Sigmoid colon (tissue), 7 donors: ENCODE measurements at regions of chr19 and their contacts with region 1.

Region 1: GRCh38 chr19:15449620-15450527 is at the start of gene WIZ:
- DNase-seq: peak; percentile 95
- H3K4me3 ChIP-seq: peak within 1 kb of the TSS; percentile 76 to 96 (median 80)
- H3K27ac ChIP-seq: peak within 1 kb of the TSS; percentile 81 to 89 (median 87)
- H3K4me1 ChIP-seq: peaks cover 0 to 37% (median 25%) of the 10 kb centered on the region in 4 donors
- H3K27me3 ChIP-seq: peaks cover 0 to 13% (median 6%) of the 10 kb centered on the region in 3 donors
- CTCF ChIP-seq: no peak
- EP300 ChIP-seq: no peak
- POLR2A ChIP-seq: no peak
- total RNA-seq, gene WIZ: 16.3 to 49.6 (median 28.4) TPM

Region 2: DNA sequence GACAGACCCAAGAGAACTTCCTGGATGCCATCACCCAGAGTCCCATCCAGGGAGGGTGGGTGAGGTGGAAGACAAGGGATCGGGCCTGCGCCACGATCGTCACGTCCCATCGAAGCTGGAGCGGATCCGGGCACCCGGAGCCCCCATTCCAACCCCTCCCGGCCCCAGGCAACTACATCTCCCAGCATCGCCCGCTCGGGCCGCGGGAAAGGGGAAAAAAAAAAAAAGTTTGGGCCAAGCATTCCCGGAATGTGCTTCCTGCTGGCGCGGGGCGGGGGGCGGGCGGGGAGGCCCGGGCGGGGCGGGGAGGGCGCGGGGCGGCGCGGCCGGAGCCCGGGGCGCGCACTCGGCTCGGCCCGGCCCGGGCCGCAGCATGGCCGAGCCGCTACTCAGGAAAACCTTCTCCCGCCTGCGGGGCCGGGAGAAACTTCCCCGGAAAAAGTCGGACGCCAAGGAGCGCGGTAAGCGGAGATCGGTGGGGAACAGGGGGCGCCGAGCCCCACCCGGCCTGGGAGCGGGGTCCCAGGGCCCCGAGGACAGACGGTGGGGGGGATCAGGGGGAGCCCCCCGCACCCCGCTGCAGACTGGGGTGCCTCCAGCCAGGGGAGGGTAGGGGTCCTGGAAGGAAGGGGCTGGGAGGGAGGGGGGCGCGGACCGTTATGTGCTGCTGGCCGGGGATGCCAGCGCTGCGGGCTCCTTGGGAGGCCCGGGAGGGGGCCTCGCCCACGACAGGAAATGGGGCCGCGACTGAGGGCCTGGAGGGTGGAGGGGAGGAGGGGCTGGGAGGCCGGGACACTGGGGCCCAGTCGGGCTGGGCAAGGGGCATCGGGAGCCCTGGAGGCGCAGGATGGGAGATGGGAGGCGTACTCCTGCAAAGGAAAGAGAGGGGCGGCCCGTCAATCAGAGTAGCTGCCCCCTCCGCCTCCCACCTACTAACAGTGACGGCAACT is 342.5 kb before region 1 on chr19 and contains the start of gene SYDE1:
- intact Hi-C with region 1: loop called (anchors 5 kb)
- DNase-seq: peak; percentile 80
- H3K4me3 ChIP-seq: peak within 1 kb of the TSS; percentile 89 to 99 (median 94)
- H3K27ac ChIP-seq: peak within 1 kb of the TSS; percentile 93 to 99 (median 96)
- H3K4me1 ChIP-seq: peaks cover 0 to 21% (median 18%) of the 10 kb centered on the region in 4 donors
- H3K27me3 ChIP-seq: no peaks in the 10 kb centered on the region
- CTCF ChIP-seq: no peak
- EP300 ChIP-seq: no peak
- POLR2A ChIP-seq: peak in 1 of 2 donors; percentile 32
- total RNA-seq, gene SYDE1: 29.6 to 39.9 (median 35.8) TPM

Region 3: GRCh38 chr19:15340086-15340485 is 109.8 kb before region 1 on chr19:
- intact Hi-C with region 1: no loop called
- DNase-seq: no peak
- H3K4me3 ChIP-seq: no peak overlapping the region
- H3K27ac ChIP-seq: no peak overlapping the region
- H3K4me1 ChIP-seq: no peaks in the 10 kb centered on the region
- H3K27me3 ChIP-seq: no peaks in the 10 kb centered on the region
- CTCF ChIP-seq: no peak
- EP300 ChIP-seq: no peak
- POLR2A ChIP-seq: no peak

Region 4: GRCh38 chr19:15379083-15379995 is 70.5 kb before region 1 on chr19 and contains the start of gene AKAP8:
- intact Hi-C with region 1: loop called (anchors 5 kb)
- DNase-seq: peak; percentile 99
- H3K4me3 ChIP-seq: peak within 1 kb of the TSS; percentile 84 to 99 (median 87)
- H3K27ac ChIP-seq: peak within 1 kb of the TSS; percentile 89 to 99 (median 95)
- H3K4me1 ChIP-seq: peaks cover 0 to 47% (median 45%) of the 10 kb centered on the region in 4 donors
- H3K27me3 ChIP-seq: no peaks in the 10 kb centered on the region
- CTCF ChIP-seq: no peak
- EP300 ChIP-seq: no peak
- POLR2A ChIP-seq: peak; percentile 27 to 42
- total RNA-seq, gene AKAP8: 15.0 to 43.8 (median 21.4) TPM

Region 5: DNA sequence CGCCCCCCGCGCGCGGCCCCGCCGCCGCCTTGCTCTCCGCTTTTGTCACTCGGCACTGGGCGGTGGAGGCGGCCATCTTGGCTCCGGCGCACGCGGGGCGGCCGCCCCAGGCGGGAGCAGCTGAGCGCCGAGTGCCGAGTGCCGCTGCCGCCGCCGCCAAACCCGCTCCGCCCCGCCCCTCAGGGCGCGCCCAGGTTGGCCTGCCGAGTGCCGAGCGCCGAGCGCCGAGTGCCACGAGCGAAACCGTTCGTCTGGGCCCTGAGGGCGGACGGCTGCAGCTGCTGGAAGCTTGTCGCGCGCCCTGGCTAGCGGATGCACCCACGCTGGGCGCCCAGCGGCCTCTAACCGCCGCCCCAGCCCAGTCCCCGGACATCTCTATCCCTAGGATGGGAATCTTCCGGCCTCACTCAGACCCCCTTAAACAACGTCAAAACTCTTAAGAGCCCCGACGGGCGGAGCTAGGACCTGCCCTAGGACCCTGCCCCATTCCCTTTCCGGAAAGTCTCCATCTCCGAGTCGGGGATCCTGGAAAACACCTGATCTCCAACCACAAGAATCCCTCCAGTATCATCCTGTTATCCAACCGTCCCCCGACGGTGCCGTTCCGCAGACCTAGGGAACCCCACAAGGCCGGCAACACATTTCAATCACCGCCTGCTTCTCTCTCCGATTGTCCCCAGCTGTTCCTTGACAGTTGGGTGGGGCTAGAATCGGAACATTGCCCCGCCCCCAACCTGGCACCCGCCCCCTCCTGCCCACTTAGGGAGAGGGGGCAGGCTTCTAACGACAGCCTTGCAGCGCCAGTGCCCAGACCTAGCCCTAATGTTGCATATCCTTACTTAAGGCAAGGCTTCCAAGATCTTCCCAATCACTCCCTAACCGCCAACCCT is 17.0 kb before region 1 on chr19:
- intact Hi-C with region 1: loop called (anchors 2 kb)
- DNase-seq: peak; percentile 93
- H3K4me3 ChIP-seq: peak overlapping the region; percentile 58 to 99 (median 92)
- H3K27ac ChIP-seq: peak overlapping the region; percentile 84 to 95 (median 88)
- H3K4me1 ChIP-seq: peaks cover 0 to 52% (median 42%) of the 10 kb centered on the region in 4 donors
- H3K27me3 ChIP-seq: no peaks in the 10 kb centered on the region
- CTCF ChIP-seq: no peak
- EP300 ChIP-seq: no peak
- POLR2A ChIP-seq: no peak

Region 6: GRCh38 chr19:15836595-15837337 is 386.9 kb after region 1 on chr19:
- intact Hi-C with region 1: loop called (anchors 10 kb)
- DNase-seq: peak; percentile 99
- H3K4me3 ChIP-seq: peak overlapping the region; percentile 58 to 91 (median 75)
- H3K27ac ChIP-seq: peak overlapping the region; percentile 90 to 100 (median 98)
- H3K4me1 ChIP-seq: peaks cover 0 to 13% (median 6%) of the 10 kb centered on the region in 4 donors
- H3K27me3 ChIP-seq: no peaks in the 10 kb centered on the region
- CTCF ChIP-seq: no peak
- EP300 ChIP-seq: peak in 2 of 4 donors; percentile 20 to 37
- POLR2A ChIP-seq: peak; percentile 83 to 92